HepG2 (cell line): ENCODE measurements at regions of chr1 and their contacts with region 1.

Region 1: DNA sequence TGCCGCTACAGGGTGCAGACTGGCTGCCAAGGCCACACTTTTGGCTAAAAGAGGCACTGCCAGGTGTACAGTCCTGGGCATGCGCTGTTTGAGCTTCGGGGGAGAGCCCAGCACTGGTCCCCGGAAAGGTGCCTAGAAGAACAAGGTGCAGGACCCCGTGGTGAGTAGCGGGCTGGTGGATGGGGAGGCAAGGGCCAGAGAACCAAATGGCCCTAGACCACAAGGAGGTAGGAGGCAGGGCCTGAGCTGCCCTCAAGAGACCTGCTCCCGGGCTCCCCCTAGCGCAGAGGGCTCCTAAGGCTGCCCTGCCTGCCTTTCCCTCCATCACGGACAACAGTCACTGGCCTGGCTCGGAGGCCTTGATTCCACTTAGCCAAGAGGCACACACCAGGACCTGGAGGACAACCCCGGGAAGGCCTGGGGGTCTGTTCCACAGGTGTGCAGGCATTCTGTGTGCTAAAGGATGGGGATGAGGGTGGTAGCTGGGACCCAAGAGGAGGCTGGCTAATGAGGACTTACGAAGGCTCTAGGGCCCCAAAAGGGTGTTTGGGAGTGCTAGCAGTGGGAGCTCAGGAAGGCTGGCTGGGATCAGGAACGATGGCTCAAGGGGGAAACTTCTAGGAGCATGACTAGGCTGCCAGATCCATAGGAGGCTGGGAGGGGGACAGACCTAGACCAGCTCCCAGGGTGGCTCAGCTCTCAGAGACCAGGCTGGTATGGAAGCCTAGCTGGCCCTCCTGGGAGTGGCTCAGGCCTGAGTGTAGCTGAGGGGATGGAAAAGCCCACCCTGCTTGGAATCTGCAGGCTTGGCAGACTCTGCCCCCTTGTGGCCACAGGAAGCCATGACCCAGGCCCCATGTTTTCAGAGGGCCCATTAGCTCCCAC is 742 bp downstream of the ARTN start:
- DNase-seq: peak; percentile 65
- ATAC-seq: peak; percentile 68
- H3K4me3 ChIP-seq: peak overlapping the region in 2 of 3 experiments; percentile 39 to 84; a peak in 2 of 6 replicates
- H3K27ac ChIP-seq: no peak overlapping the region
- H3K4me1 ChIP-seq: peaks cover 39% of the 10 kb centered on the region
- H3K27me3 ChIP-seq: no peaks in the 10 kb centered on the region
- CTCF ChIP-seq: peak; percentile 91
- EP300 ChIP-seq: no peak
- POLR2A ChIP-seq: no peak
- RAD21 ChIP-seq: peak; percentile 75

Region 2: GRCh38 chr1:43757343-43758053 is 176.8 kb before region 1 on chr1:
- CTCF ChIA-PET with region 1: interaction called, 44 read pairs
- POLR2A ChIA-PET with region 1: no interaction called
- in situ Hi-C with region 1: loop called (anchors 5 kb)
- intact Hi-C with region 1: no loop called
- DNase-seq: peak; percentile 69
- ATAC-seq: peak; percentile 88
- H3K4me3 ChIP-seq: peak overlapping the region in 1 of 3 experiments; percentile 20; a peak in 1 of 6 replicates
- H3K27ac ChIP-seq: peak overlapping the region; percentile 63
- H3K4me1 ChIP-seq: peaks cover 39% of the 10 kb centered on the region
- H3K27me3 ChIP-seq: no peaks in the 10 kb centered on the region
- CTCF ChIP-seq: no peak
- EP300 ChIP-seq: peak in 1 of 2 experiments; percentile 67; a peak in 2 of 4 replicates
- POLR2A ChIP-seq: no peak
- RAD21 ChIP-seq: no peak

Region 3: DNA sequence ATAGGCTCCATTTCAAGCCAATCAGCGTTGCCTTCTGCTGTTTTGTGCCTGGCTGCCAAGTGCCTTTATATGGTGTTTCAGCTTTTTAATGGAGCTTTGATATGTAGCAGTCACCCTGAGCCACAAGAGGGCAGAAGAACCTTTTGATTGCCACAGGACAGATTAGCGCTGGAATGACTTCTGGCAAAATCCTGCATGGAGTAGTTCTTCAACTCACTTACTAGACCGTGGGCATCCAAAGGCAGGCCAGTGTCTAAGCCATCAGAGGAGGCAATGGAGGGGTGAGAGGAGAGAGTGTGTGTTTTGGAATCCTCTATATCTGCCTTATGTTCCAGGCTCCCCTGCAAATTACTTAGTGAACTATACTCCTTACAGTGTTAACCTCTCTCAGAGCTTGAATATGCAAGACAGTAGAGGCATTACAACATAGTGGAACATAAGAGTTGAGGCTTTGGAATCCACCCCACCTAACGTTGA is 170.8 kb before region 1 on chr1:
- CTCF ChIA-PET with region 1: interaction called, 44 read pairs
- POLR2A ChIA-PET with region 1: interaction called, 8 read pairs
- in situ Hi-C with region 1: loop called (anchors 5 kb)
- intact Hi-C with region 1: loop called (anchors 1 kb)
- DNase-seq: peak; percentile 71
- ATAC-seq: peak; percentile 95
- H3K4me3 ChIP-seq: no peak overlapping the region
- H3K27ac ChIP-seq: no peak overlapping the region
- H3K4me1 ChIP-seq: peaks cover 17% of the 10 kb centered on the region
- H3K27me3 ChIP-seq: no peaks in the 10 kb centered on the region
- CTCF ChIP-seq: peak; percentile 89
- EP300 ChIP-seq: no peak
- POLR2A ChIP-seq: no peak
- RAD21 ChIP-seq: peak; percentile 85

Region 4: GRCh38 chr1:43946236-43947060 is 12.1 kb after region 1 on chr1 and contains the start of gene IPO13:
- CTCF ChIA-PET with region 1: no interaction called
- POLR2A ChIA-PET with region 1: interaction called, 38 read pairs
- in situ Hi-C with region 1: no loop called
- intact Hi-C with region 1: loop called (anchors 1 kb)
- DNase-seq: peak; percentile 92
- ATAC-seq: peak; percentile 92
- H3K4me3 ChIP-seq: peak within 1 kb of the TSS; percentile 69 to 90 (median 79)
- H3K27ac ChIP-seq: peak within 1 kb of the TSS; percentile 93
- H3K4me1 ChIP-seq: peaks cover 27% of the 10 kb centered on the region
- H3K27me3 ChIP-seq: no peaks in the 10 kb centered on the region; a peak in 1 of 5 replicates
- CTCF ChIP-seq: peak; percentile 99
- EP300 ChIP-seq: no peak
- POLR2A ChIP-seq: peak; percentile 76 to 87
- RAD21 ChIP-seq: peak; percentile 72
- total RNA-seq, gene IPO13: 14.3 and 15.6 TPM in 2 replicates

Region 5: GRCh38 chr1:44249543-44249942 is 315.2 kb after region 1 on chr1:
- CTCF ChIA-PET with region 1: no interaction called
- POLR2A ChIA-PET with region 1: no interaction called
- in situ Hi-C with region 1: no loop called
- intact Hi-C with region 1: no loop called
- DNase-seq: no peak
- ATAC-seq: peak; percentile 45; the same call in 1 of the 3 replicates
- H3K4me3 ChIP-seq: no peak overlapping the region
- H3K27ac ChIP-seq: no peak overlapping the region
- H3K4me1 ChIP-seq: peaks cover 22% of the 10 kb centered on the region
- H3K27me3 ChIP-seq: no peaks in the 10 kb centered on the region
- CTCF ChIP-seq: no peak
- EP300 ChIP-seq: no peak
- POLR2A ChIP-seq: no peak
- RAD21 ChIP-seq: no peak